ENCODE measurements at regions of chr5 and their contacts with region 1.

Region 1: DNA sequence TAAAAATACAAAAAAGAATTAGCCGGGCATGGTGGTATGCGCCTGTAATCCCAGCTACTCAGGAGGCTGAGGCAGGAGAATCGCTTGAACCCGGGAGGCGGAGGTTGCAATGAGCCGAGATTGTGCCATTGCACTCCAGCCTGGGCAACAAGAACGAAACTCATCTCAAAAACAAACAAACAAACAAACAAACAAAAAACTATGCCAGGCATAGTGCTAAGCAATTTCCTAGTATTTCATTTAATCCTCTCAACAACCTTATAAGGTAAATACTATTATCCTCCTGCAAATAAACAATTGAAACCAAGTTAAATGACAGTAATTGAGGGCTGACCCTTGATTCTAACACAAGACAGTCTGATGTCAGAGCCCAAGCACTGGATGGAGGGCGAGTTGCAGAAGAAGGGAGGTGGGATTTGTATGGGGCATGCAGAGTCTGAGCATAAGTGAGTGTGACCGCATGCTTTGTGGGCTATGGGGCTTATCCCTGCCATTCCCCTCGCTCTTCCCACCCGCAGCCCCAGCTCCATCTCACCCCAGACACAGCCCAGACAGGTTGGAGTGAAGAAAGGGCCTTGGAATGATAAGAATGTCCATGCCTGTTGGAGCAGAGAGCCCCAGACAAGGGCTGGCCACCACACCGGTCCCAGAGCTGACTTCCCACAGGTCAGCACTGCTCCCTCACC is 24.3 kb upstream of the RPS14 start:
- DNase-seq: no peak
- ATAC-seq: no peak
- H3K4me3 Mint-ChIP-seq: no peak overlapping the region
- H3K27ac Mint-ChIP-seq: no peak overlapping the region
- H3K4me1 Mint-ChIP-seq: peaks cover 14% of the 10 kb centered on the region
- H3K27me3 Mint-ChIP-seq: no peaks in the 10 kb centered on the region
- CTCF ChIP-seq: no peak

Region 2: GRCh38 chr5:150513375-150514309 is 39.8 kb after region 1 on chr5:
- CTCF ChIA-PET with region 1: no interaction called
- POLR2A ChIA-PET with region 1: interaction called, 12 read pairs
- intact Hi-C with region 1: no loop called
- DNase-seq: no peak
- ATAC-seq: no peak
- H3K4me3 Mint-ChIP-seq: no peak overlapping the region
- H3K27ac Mint-ChIP-seq: no peak overlapping the region
- H3K4me1 Mint-ChIP-seq: peaks cover 2% of the 10 kb centered on the region
- H3K27me3 Mint-ChIP-seq: no peaks in the 10 kb centered on the region
- CTCF ChIP-seq: no peak

Measured in activated B cell treated with CpG ODN at 0.5 μM for 24 hours (primary cell).